ENCODE measurements at regions of chr3 and their contacts with region 1.

Region 1: GRCh38 chr3:121545574-121546455 is at the start of gene POLQ:
- DNase-seq: peak; percentile 93
- H3K4me3 Mint-ChIP-seq: peak within 1 kb of the TSS; percentile 86
- H3K27ac Mint-ChIP-seq: peak within 1 kb of the TSS; percentile 92
- H3K4me1 Mint-ChIP-seq: peaks cover 6% of the 10 kb centered on the region
- H3K27me3 Mint-ChIP-seq: no peaks in the 10 kb centered on the region
- total RNA-seq, gene POLQ: 23.9 to 25.1 TPM

Region 2: GRCh38 chr3:121749276-121750086 is 203.7 kb after region 1 on chr3 and contains the start of gene GOLGB1:
- CTCF ChIA-PET with region 1: no interaction called
- POLR2A ChIA-PET with region 1: no interaction called
- intact Hi-C with region 1: loop called (anchors 1 kb)
- DNase-seq: peak; percentile 97
- H3K4me3 Mint-ChIP-seq: no peak within 1 kb of the TSS
- H3K27ac Mint-ChIP-seq: no peak within 1 kb of the TSS
- H3K4me1 Mint-ChIP-seq: peaks cover 10% of the 10 kb centered on the region
- H3K27me3 Mint-ChIP-seq: no peaks in the 10 kb centered on the region
- total RNA-seq, gene GOLGB1: 22.7 to 26.0 TPM

Region 3: DNA sequence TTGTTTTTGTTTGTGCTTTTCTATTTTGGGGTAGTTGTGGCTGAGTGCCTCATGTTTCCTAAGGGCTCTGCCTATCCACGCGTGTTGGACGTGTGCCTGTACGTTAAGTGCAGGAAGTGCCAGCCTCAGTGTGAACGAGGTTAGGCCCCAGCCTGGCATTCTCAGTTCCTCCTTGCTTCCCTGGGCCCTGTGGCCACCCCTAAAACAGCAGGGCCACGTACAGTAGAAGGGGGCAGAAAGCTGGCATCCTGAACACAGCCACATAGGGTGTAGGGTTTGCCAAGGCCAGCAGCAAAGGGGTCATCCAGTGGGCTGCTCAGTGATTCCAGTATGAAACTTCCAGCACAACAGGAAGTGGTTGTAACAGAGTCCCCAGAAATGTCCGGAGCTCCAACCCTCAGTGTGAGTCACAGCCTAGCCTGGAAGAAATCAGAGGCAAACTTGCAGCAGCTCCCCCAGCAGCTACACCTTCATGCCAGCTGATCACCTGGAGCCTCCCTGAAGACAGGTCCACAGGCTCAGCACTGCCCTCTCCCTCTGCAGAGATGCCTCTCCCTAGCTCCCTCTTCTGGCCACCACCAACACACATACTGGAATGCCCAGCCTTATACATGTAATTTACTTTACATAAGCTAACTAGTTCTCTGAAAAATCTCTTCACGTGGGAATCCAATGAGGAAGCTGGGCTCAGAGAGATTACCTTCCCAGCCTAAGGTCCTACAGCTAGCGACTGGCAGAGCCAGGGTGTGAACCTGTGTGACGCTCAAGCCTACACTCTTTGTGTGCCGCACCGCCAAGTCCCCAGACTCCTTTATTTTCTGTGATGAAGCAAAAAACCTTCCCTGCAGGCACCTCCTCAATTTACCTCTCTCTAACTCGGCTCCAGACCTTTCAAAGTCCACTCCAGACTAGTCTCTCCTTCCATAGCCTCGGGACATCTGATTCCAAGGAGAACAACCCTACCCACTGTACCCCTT is 449.6 kb after region 1 on chr3:
- CTCF ChIA-PET with region 1: no interaction called
- POLR2A ChIA-PET with region 1: no interaction called
- intact Hi-C with region 1: loop called (anchors 10 kb)
- DNase-seq: peak; percentile 40
- H3K4me3 Mint-ChIP-seq: no peak overlapping the region
- H3K27ac Mint-ChIP-seq: no peak overlapping the region
- H3K4me1 Mint-ChIP-seq: peaks cover 29% of the 10 kb centered on the region
- H3K27me3 Mint-ChIP-seq: no peaks in the 10 kb centered on the region

Region 4: GRCh38 chr3:122258757-122259371 is 713.0 kb after region 1 on chr3:
- CTCF ChIA-PET with region 1: interaction called, 9 read pairs
- POLR2A ChIA-PET with region 1: no interaction called
- intact Hi-C with region 1: loop called (anchors 1 kb)
- DNase-seq: peak; percentile 81
- H3K4me3 Mint-ChIP-seq: no peak overlapping the region
- H3K27ac Mint-ChIP-seq: peak overlapping the region; percentile 45
- H3K4me1 Mint-ChIP-seq: peaks cover 19% of the 10 kb centered on the region
- H3K27me3 Mint-ChIP-seq: peaks cover 15% of the 10 kb centered on the region

Region 5: GRCh38 chr3:122356415-122356814 is 810.6 kb after region 1 on chr3:
- CTCF ChIA-PET with region 1: no interaction called
- POLR2A ChIA-PET with region 1: no interaction called
- intact Hi-C with region 1: loop called (anchors 2 kb)
- DNase-seq: peak; percentile 54
- H3K4me3 Mint-ChIP-seq: no peak overlapping the region
- H3K27ac Mint-ChIP-seq: no peak overlapping the region
- H3K4me1 Mint-ChIP-seq: no peaks in the 10 kb centered on the region
- H3K27me3 Mint-ChIP-seq: no peaks in the 10 kb centered on the region

Region 6: DNA sequence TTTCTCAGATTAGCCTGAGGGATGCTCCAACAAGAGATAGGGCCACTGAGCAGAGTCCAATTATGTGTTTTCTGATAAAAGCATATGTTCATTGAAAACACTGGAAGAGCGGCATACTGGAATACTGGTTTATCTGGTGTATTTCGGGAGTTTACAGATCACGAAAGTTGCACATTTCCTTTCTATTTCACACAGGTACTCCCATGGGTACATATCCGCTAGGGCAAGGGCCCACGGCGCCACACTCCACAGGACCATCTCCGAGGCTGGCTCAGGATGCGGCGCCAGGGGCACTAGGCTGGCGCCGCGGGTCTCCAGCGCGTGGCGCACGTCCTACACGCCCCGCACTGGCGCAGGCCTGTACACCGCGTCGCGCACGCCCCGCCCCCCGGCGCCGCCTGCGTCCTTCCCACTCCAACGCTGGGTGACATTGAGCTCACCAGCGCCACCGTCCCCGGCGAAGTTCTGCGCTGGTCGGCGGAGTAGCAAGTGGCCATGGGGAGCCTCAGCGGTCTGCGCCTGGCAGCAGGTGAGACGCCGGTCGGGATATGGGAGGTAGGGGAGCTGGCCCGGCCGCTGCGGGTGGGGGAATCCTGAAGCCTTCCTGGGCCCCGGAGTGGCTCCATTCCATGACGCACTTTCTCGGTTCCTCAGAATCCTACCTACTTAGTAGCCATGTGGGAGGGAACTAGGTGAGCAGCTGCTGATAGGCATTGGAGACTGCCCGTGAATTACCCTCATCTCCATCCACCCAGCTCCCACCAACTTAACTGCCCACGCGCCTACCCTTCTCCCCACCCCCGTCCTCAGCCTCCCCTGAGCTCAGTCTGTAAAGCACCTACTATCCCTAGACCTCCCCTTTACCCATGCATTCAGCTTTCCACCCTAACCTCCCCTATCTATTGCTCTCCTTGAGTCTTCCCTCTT is 838.2 kb after region 1 on chr3 and contains the start of gene FAM162A:
- CTCF ChIA-PET with region 1: interaction called, 6 read pairs
- POLR2A ChIA-PET with region 1: no interaction called
- intact Hi-C with region 1: loop called (anchors 1 kb)
- DNase-seq: peak; percentile 95
- H3K4me3 Mint-ChIP-seq: peak within 1 kb of the TSS; percentile 94
- H3K27ac Mint-ChIP-seq: peak within 1 kb of the TSS; percentile 92
- H3K4me1 Mint-ChIP-seq: peaks cover 60% of the 10 kb centered on the region
- H3K27me3 Mint-ChIP-seq: no peaks in the 10 kb centered on the region
- total RNA-seq, gene FAM162A: 99.1 to 102 TPM

Measured in activated CD4-positive, alpha-beta memory T cell treated with anti-CD3 and anti-CD28 coated beads for 36 hours (primary cell).